ENCODE measurements at regions of chr1 and their contacts with region 1.

Region 1: GRCh38 chr1:36506276-36506920 is 23.7 kb upstream of the CSF3R start:
- DNase-seq: no peak
- H3K4me3 ChIP-seq: no peak overlapping the region
- H3K4me3 Mint-ChIP-seq: no peak overlapping the region
- H3K27ac ChIP-seq: no peak overlapping the region
- H3K27ac Mint-ChIP-seq: no peak overlapping the region
- H3K4me1 ChIP-seq: no peaks in the 10 kb centered on the region
- H3K4me1 Mint-ChIP-seq: no peaks in the 10 kb centered on the region
- H3K27me3 ChIP-seq: no peaks in the 10 kb centered on the region
- H3K27me3 Mint-ChIP-seq: peaks cover 17 to 33% of the 10 kb centered on the region in 2 donors

Region 2: GRCh38 chr1:36516372-36517325 is 10.3 kb after region 1 on chr1:
- CTCF ChIA-PET with region 1: interaction called, 21 read pairs
- POLR2A ChIA-PET with region 1: no interaction called
- intact Hi-C with region 1: no loop called
- DNase-seq: peak in 4 of 5 donors; percentile 11 to 28 (median 12)
- H3K4me3 ChIP-seq: no peak overlapping the region
- H3K4me3 Mint-ChIP-seq: no peak overlapping the region
- H3K27ac ChIP-seq: no peak overlapping the region
- H3K27ac Mint-ChIP-seq: no peak overlapping the region
- H3K4me1 ChIP-seq: no peaks in the 10 kb centered on the region
- H3K4me1 Mint-ChIP-seq: no peaks in the 10 kb centered on the region
- H3K27me3 ChIP-seq: no peaks in the 10 kb centered on the region
- H3K27me3 Mint-ChIP-seq: peaks cover 0 to 2% of the 10 kb centered on the region in 2 donors

Measured in CD4-positive, alpha-beta memory T cell (primary cell).